HepG2 (cell line): ENCODE measurements at regions of chr3 and their contacts with region 1.

Region 1: DNA sequence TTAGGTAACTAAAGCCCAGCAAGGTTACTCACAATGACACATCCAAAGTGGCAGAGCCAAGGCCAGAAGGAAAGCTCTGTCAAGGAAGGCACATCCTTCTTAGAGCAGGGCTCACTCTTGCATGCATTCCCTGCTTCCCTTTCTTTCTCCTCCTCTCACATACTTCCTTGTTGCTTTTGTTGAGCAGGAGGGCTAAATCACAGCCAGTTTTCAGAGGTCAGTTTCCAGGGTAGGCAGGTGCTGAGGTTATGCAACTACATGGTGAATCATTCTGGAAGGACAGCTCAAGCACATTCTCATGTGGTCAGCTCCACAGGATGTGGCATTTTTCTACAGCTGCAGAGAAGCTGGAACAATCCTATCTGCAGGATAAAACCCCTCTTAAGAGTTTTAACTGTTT is 275.6 kb downstream of the ZNF621 start:
- DNase-seq: peak; percentile 57
- ATAC-seq: peak; percentile 68; the same call in 1 of the 3 replicates
- H3K4me3 ChIP-seq: no peak overlapping the region
- H3K27ac ChIP-seq: no peak overlapping the region
- H3K4me1 ChIP-seq: peaks cover 13% of the 10 kb centered on the region
- H3K27me3 ChIP-seq: 0 out of 5 replicates have a peak, but pooled peaks cover 0 to 4% of the 10 kb centered on the region in 2 experiments
- CTCF ChIP-seq: no peak
- EP300 ChIP-seq: peak in 1 of 2 experiments; percentile 23; a peak in 1 of 4 replicates
- POLR2A ChIP-seq: no peak
- RAD21 ChIP-seq: no peak

Region 2: DNA sequence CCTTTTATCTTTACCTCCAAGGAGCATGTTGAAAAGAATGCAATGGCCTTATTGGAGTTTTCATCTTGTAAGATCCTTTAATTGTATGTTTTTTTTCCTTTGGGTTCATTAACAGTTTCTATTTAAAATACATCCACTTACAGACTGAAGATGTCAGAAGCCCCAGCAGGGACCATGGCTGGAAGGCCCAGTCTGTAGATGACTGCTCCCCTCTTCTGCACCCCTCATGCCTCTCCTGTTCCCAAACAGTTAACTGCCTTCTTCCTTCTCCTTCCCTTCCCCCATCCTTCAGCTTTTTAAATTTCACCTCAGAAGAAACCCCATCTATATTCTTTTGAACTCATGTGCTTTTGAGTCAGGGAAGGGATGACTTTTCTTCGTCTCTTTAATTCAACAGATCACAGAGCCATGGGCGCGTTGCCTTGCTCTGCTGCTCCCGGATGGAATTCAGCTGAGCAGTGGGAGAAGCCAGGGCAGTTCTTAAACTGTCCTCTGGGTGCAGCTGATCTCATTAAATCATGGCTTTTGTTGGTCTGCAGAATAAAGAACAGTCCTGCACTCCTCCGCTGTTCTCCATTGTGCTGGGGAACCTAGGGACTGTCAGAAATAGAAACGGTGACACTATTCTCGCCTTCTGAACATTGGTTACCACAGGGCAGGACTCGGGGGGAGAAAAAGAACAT is 562.3 kb before region 1 on chr3:
- CTCF ChIA-PET with region 1: no interaction called
- POLR2A ChIA-PET with region 1: no interaction called
- in situ Hi-C with region 1: no loop called
- intact Hi-C with region 1: no loop called
- DNase-seq: no peak
- ATAC-seq: peak; percentile 89
- H3K4me3 ChIP-seq: no peak overlapping the region
- H3K27ac ChIP-seq: no peak overlapping the region
- H3K4me1 ChIP-seq: no peaks in the 10 kb centered on the region
- H3K27me3 ChIP-seq: no peaks in the 10 kb centered on the region
- CTCF ChIP-seq: no peak
- EP300 ChIP-seq: no peak
- POLR2A ChIP-seq: no peak
- RAD21 ChIP-seq: no peak

Region 3: GRCh38 chr3:40847551-40847992 is 47.2 kb after region 1 on chr3:
- CTCF ChIA-PET with region 1: no interaction called
- POLR2A ChIA-PET with region 1: no interaction called
- in situ Hi-C with region 1: no loop called
- intact Hi-C with region 1: no loop called
- DNase-seq: peak; percentile 29
- ATAC-seq: peak; percentile 58
- H3K4me3 ChIP-seq: no peak overlapping the region
- H3K27ac ChIP-seq: no peak overlapping the region
- H3K4me1 ChIP-seq: peaks cover 72% of the 10 kb centered on the region
- H3K27me3 ChIP-seq: no peaks in the 10 kb centered on the region
- CTCF ChIP-seq: peak; percentile 63
- EP300 ChIP-seq: no peak
- POLR2A ChIP-seq: no peak
- RAD21 ChIP-seq: no peak

Region 4: GRCh38 chr3:40877631-40878463 is 77.5 kb after region 1 on chr3:
- CTCF ChIA-PET with region 1: no interaction called
- POLR2A ChIA-PET with region 1: no interaction called
- in situ Hi-C with region 1: no loop called
- intact Hi-C with region 1: loop called (anchors 10 kb)
- DNase-seq: peak; percentile 12
- ATAC-seq: peak; percentile 29; the same call in 1 of the 3 replicates
- H3K4me3 ChIP-seq: no peak overlapping the region; a peak in 1 of 6 replicates
- H3K27ac ChIP-seq: no peak overlapping the region
- H3K4me1 ChIP-seq: peaks cover 50% of the 10 kb centered on the region
- H3K27me3 ChIP-seq: no peaks in the 10 kb centered on the region
- CTCF ChIP-seq: no peak
- EP300 ChIP-seq: no peak
- POLR2A ChIP-seq: no peak
- RAD21 ChIP-seq: no peak